H1 (cell line): ENCODE measurements at regions of chr3 and their contacts with region 1.

Region 1: GRCh38 chr3:14203521-14204079 is 25.0 kb downstream of the LSM3 start:
- DNase-seq: peak in 1 of 2 experiments; percentile 65
- H3K4me3 ChIP-seq: no peak overlapping the region
- H3K27ac ChIP-seq: no peak overlapping the region
- H3K4me1 ChIP-seq: no peaks in the 10 kb centered on the region; a peak in 2 of 7 replicates
- H3K27me3 ChIP-seq: no peaks in the 10 kb centered on the region
- CTCF ChIP-seq: peak; percentile 46 to 96 (median 89)
- EP300 ChIP-seq: no peak
- POLR2A ChIP-seq: no peak
- RAD21 ChIP-seq: peak; percentile 90 to 92

Region 2: DNA sequence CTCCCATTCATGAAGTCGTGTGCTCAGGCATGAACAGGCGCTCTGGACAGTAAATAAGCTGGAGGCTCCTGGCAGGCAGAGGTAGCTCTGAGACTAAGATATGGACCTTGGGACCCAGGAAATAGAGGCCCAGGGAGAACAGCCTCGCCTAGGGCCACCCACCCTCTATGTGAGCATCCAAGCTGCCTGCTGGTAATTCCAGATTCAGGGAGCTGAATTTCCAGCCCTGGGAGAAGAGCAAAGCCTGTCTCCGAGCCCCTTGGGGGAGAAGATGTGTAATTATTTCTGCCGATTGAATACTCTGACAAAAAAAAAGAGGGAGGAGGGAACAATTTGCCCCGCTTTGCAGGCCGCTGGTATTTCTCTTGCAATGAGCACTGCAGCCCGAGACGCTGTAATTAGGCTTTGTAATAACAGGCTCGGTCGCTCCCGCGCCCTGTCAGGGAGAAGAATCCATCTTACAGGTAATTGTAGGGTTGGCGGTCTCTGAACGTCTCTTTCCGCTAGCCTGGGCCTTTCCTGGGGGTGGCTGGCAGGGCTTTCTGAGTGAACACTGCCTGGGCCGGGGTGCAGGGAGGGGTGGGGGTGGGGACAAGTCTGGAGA is 455.2 kb before region 1 on chr3:
- CTCF ChIA-PET with region 1: no interaction called
- POLR2A ChIA-PET with region 1: no interaction called
- DNase-seq: no peak
- H3K4me3 ChIP-seq: no peak overlapping the region
- H3K27ac ChIP-seq: no peak overlapping the region
- H3K4me1 ChIP-seq: no peaks in the 10 kb centered on the region
- H3K27me3 ChIP-seq: no peaks in the 10 kb centered on the region
- CTCF ChIP-seq: no peak
- EP300 ChIP-seq: no peak
- POLR2A ChIP-seq: no peak
- RAD21 ChIP-seq: no peak

Region 3: GRCh38 chr3:14216257-14217048 is 12.9 kb after region 1 on chr3:
- CTCF ChIA-PET with region 1: interaction called, 157 read pairs
- POLR2A ChIA-PET with region 1: interaction called, 12 read pairs
- DNase-seq: peak; percentile 64 to 86
- H3K4me3 ChIP-seq: peak overlapping the region; percentile 25 to 57 (median 42); a peak in 7 of 8 replicates
- H3K27ac ChIP-seq: peak overlapping the region; percentile 4; the same call in 1 of the 2 replicates
- H3K4me1 ChIP-seq: peaks cover 0 to 2% (median 0%) of the 10 kb centered on the region in 4 experiments; a peak in 3 of 7 replicates
- H3K27me3 ChIP-seq: no peaks in the 10 kb centered on the region
- CTCF ChIP-seq: peak; percentile 88 to 98 (median 95)
- EP300 ChIP-seq: 0 out of 3 replicates have a peak, but pooled peaks of 1 of the 2 experiments have one; percentile 17
- POLR2A ChIP-seq: peak in 1 of 2 experiments; percentile 49; a peak in 2 of 3 replicates
- RAD21 ChIP-seq: peak; percentile 58 to 66

Region 4: DNA sequence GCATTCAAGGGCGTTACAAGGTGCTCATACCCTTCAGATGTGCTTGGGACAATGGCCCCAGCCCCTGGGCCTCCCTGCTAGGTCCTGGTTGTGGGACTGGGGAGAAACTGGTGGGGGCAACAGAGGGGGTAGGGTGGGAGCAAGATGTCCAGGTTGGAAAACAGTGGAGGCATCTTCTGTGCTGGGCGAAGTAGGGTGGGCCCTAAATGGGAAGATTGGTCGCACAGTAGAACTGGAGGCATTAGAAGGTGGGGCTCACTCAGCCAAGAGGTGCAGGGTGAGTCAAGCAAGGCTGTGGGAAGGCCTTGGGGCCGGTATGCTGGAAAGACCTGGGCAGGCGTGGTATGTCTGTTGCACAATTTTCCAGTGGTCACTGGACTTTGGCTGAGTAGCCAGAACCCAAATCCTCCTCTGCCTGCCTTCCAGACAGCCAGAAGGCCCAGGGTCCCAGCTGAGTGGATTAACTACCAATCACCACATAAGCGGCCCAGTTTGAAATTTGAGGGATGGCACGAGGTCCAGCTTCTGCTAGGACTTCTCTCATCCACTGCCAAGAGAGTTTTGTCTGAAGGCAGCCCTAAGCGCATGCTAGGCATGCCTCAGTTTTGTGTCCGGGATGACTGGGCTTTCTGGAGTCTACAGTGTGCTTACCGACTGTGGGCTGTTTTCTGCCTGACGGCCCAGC is 49.6 kb after region 1 on chr3:
- CTCF ChIA-PET with region 1: interaction called, 15 read pairs
- POLR2A ChIA-PET with region 1: no interaction called
- DNase-seq: no peak
- H3K4me3 ChIP-seq: no peak overlapping the region
- H3K27ac ChIP-seq: no peak overlapping the region
- H3K4me1 ChIP-seq: peaks cover 0 to 7% (median 0%) of the 10 kb centered on the region in 4 experiments; a peak in 1 of 7 replicates
- H3K27me3 ChIP-seq: peaks cover 0 to 4% (median 1%) of the 10 kb centered on the region in 4 experiments; a peak in 2 of 7 replicates
- CTCF ChIP-seq: no peak
- EP300 ChIP-seq: no peak
- POLR2A ChIP-seq: no peak
- RAD21 ChIP-seq: no peak

Region 5: DNA sequence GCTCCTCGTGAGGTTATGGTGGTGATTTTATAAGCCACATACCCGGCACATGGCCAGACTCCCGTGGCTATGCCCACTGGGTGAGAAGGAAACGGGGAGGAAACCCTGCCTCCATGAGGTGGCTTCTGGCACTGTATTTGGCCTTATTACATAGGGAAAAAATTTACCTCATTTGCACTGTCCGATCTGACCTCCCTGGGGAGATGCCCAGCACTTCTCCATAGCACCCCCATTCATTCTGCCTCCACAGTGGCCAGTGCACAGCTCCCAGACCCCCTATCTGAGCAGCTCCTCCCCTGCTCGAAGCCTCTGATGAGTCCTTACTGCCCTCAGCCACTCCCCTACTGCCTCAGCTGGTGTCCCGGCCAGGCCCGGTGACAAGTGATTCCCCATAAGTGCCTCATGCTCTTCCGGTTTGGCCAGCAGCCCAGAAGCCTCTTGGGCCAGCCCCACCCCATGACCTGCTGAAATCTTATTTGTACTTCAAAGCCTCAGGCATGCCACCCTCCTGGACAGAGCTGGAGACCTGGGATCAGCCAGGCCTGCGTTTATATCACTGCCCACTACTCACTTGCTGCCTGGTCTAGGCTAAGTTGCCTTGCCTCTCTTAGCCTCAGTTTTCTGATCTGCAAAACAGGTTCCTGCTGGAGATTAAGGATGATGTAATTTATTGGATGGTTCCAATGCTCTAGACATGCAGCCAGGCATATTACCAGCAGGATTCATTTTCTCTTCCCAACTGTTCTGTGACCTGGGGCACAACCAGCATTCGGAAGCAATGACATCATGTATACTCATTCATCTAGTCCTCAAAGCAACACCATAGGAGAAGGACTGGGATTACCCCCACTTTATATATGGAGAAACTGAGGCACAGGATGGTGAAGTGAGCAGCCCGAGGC is 168.2 kb after region 1 on chr3:
- CTCF ChIA-PET with region 1: interaction called, 15 read pairs
- POLR2A ChIA-PET with region 1: no interaction called
- DNase-seq: no peak
- H3K4me3 ChIP-seq: no peak overlapping the region
- H3K27ac ChIP-seq: no peak overlapping the region
- H3K4me1 ChIP-seq: peaks cover 2 to 21% (median 5%) of the 10 kb centered on the region in 4 experiments; a peak in 6 of 7 replicates
- H3K27me3 ChIP-seq: no peaks in the 10 kb centered on the region
- CTCF ChIP-seq: no peak
- EP300 ChIP-seq: no peak
- POLR2A ChIP-seq: no peak
- RAD21 ChIP-seq: no peak

Region 6: DNA sequence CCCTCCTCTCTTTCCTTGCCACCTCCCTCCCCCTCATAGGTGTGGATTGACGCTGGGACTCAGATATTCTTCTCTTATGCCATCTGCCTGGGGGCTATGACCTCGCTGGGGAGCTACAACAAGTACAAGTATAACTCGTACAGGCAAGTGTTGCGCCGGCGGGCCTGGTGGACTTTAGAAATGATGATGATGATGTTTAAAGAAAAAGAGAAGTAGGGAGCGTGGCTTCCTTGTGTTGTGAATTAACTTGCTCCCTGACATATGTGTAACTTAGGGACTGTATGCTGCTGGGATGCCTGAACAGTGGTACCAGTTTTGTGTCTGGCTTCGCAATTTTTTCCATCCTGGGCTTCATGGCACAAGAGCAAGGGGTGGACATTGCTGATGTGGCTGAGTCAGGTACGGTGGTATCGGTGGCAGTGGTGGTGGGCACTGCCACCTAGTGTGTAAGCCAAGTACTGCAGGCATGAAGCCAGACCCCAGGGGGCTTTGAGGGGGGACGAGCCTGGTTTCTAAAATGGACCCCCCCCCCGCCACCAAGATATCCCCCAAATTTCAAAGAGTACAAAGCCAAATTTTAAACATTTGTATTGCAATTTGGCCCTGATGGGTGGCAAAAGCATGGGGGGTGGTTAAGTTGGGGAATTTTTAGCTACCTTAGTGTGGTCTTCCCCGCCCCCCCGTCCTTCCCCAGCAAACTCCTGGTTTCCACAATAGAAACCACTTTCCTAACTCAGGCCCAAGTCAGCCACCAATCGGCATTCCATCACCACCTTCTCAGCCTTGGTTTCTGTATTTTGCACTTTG is 264.4 kb after region 1 on chr3:
- CTCF ChIA-PET with region 1: interaction called, 40 read pairs
- POLR2A ChIA-PET with region 1: no interaction called
- DNase-seq: peak in 1 of 2 experiments; percentile 72
- H3K4me3 ChIP-seq: no peak overlapping the region
- H3K27ac ChIP-seq: 0 out of 2 replicates have a peak overlapping the region, but pooled peaks have one; percentile 3
- H3K4me1 ChIP-seq: peaks cover 0 to 2% (median under 1%) of the 10 kb centered on the region in 4 experiments; a peak in 4 of 7 replicates
- H3K27me3 ChIP-seq: no peaks in the 10 kb centered on the region
- CTCF ChIP-seq: peak in 2 of 3 experiments; percentile 85; a peak in 3 of 4 replicates
- EP300 ChIP-seq: no peak
- POLR2A ChIP-seq: no peak
- RAD21 ChIP-seq: peak; percentile 88 to 94